ENCODE measurements at regions of chr4 and their contacts with region 1.

Region 1: GRCh38 chr4:124712372-124713184 is at the start of gene ANKRD50:
- DNase-seq: peak; percentile 89
- H3K4me3 ChIP-seq: peak within 1 kb of the TSS; percentile 78 to 98 (median 80)
- H3K27ac ChIP-seq: peak within 1 kb of the TSS; percentile 80
- H3K4me1 ChIP-seq: peaks cover 9% of the 10 kb centered on the region
- H3K27me3 ChIP-seq: no peaks in the 10 kb centered on the region
- CTCF ChIP-seq: no peak
- total RNA-seq, gene ANKRD50: 21.6 to 34.3 TPM

Region 2: GRCh38 chr4:124486426-124486825 is 226.2 kb before region 1 on chr4:
- CTCF ChIA-PET with region 1: no interaction called
- dilution Hi-C with region 1: no loop called
- in situ Hi-C with region 1: no loop called
- intact Hi-C with region 1: loop called (anchors 2 kb)
- DNase-seq: no peak
- H3K4me3 ChIP-seq: no peak overlapping the region
- H3K27ac ChIP-seq: no peak overlapping the region
- H3K4me1 ChIP-seq: no peaks in the 10 kb centered on the region
- H3K27me3 ChIP-seq: no peaks in the 10 kb centered on the region
- CTCF ChIP-seq: peak; percentile 2 to 16

Region 3: DNA sequence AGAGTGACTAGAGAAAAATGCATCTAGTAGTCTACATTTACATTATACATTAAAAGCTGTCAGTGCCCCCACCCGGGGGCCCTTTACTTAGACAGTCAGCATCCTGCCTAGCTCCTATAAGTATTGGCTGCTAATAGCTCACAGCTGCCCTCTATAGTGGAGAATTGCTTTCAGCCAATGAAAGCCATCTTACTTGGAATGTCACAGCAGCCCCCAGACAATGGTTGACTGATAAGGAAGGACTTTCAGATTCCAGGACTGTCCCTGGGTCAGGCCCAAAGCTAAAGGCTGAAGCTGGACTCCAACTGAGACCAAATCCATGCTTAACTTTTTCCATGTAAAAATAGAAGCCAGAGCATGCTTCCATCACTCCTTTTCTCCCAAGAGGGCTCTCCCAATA is 197.0 kb before region 1 on chr4:
- CTCF ChIA-PET with region 1: no interaction called
- dilution Hi-C with region 1: no loop called
- in situ Hi-C with region 1: no loop called
- intact Hi-C with region 1: no loop called
- DNase-seq: no peak
- H3K4me3 ChIP-seq: no peak overlapping the region
- H3K27ac ChIP-seq: no peak overlapping the region
- H3K4me1 ChIP-seq: no peaks in the 10 kb centered on the region
- H3K27me3 ChIP-seq: no peaks in the 10 kb centered on the region
- CTCF ChIP-seq: no peak

Region 4: GRCh38 chr4:124641715-124642381 is 70.7 kb before region 1 on chr4:
- CTCF ChIA-PET with region 1: no interaction called
- dilution Hi-C with region 1: no loop called
- in situ Hi-C with region 1: no loop called
- intact Hi-C with region 1: loop called (anchors 5 kb)
- DNase-seq: peak; percentile 89
- H3K4me3 ChIP-seq: no peak overlapping the region
- H3K27ac ChIP-seq: peak overlapping the region; percentile 40
- H3K4me1 ChIP-seq: peaks cover 33% of the 10 kb centered on the region
- H3K27me3 ChIP-seq: no peaks in the 10 kb centered on the region
- CTCF ChIP-seq: no peak

Region 5: DNA sequence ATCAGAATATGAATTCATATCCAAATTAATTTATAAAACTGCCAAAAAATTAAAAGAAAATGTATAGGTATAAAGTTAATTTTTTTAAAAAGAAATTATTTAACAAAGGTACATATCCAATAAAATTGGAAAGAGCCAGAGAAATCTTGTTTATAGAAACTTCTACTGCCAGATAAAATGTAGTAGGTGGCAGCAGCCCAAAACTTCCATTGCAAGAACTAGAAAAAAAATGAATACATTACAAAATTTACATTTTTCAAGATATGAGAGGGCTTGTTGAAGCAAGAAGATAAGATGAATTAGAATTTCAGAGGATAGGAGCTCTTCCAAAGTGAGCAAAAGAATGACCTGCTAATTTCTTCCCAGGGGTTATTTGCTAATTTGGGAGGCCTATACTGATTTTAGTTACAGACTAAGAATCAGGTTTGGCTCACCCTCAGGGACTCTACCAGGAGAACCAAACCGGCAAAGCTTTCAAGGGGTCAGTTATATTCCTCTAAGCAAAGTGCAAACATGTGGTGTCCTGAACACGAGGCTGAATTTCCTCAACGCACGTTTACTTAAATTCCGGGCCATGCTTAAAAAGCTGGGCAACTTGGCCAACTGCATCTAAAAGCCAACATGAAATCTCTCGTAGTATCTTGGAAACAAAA is 17.5 kb before region 1 on chr4:
- CTCF ChIA-PET with region 1: no interaction called
- dilution Hi-C with region 1: no loop called
- in situ Hi-C with region 1: no loop called
- intact Hi-C with region 1: no loop called
- DNase-seq: no peak
- H3K4me3 ChIP-seq: no peak overlapping the region
- H3K27ac ChIP-seq: no peak overlapping the region
- H3K4me1 ChIP-seq: no peaks in the 10 kb centered on the region
- H3K27me3 ChIP-seq: no peaks in the 10 kb centered on the region
- CTCF ChIP-seq: no peak

Region 6: GRCh38 chr4:124738994-124739393 is 26.4 kb after region 1 on chr4:
- CTCF ChIA-PET with region 1: no interaction called
- dilution Hi-C with region 1: no loop called
- in situ Hi-C with region 1: no loop called
- intact Hi-C with region 1: no loop called
- DNase-seq: no peak
- H3K4me3 ChIP-seq: no peak overlapping the region
- H3K27ac ChIP-seq: no peak overlapping the region
- H3K4me1 ChIP-seq: no peaks in the 10 kb centered on the region
- H3K27me3 ChIP-seq: no peaks in the 10 kb centered on the region
- CTCF ChIP-seq: no peak

Region 7: DNA sequence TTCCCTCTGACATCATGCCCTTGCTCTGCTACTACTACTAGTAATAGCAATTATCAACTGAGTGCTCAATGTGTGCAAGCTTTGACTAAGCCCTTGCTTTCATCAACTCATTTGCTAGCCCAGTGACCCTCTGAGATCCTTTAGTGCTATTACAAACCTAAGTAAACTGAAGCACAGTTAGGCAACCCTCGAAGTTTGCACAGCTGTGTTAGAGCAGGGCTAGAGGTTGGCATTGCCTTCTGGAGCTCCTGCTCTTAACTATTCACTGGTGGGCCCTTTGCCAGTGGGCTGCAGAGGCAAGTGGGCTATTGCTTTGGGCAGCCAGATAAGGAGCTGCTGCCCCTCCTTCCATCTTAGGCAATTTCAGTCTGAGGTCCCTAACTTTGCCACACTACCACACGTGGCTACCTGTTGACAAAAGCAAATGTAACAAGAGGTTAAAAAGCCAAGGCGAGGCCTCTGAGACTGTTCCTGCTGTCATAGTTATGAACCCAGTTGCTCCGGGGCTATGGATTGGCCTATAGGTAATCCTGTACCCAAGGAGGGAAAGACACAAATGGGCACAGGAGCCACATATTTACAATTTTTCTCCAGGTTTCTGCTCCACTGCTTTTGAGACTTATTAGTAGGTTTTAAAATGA is 41.5 kb after region 1 on chr4:
- CTCF ChIA-PET with region 1: no interaction called
- dilution Hi-C with region 1: no loop called
- in situ Hi-C with region 1: no loop called
- intact Hi-C with region 1: no loop called
- DNase-seq: no peak
- H3K4me3 ChIP-seq: no peak overlapping the region
- H3K27ac ChIP-seq: no peak overlapping the region
- H3K4me1 ChIP-seq: no peaks in the 10 kb centered on the region
- H3K27me3 ChIP-seq: no peaks in the 10 kb centered on the region
- CTCF ChIP-seq: no peak

Region 8: GRCh38 chr4:125105561-125105960 is 393.0 kb after region 1 on chr4:
- CTCF ChIA-PET with region 1: no interaction called
- dilution Hi-C with region 1: no loop called
- in situ Hi-C with region 1: no loop called
- intact Hi-C with region 1: loop called (anchors 2 kb)
- DNase-seq: no peak
- H3K4me3 ChIP-seq: no peak overlapping the region
- H3K27ac ChIP-seq: no peak overlapping the region
- H3K4me1 ChIP-seq: peaks cover 5% of the 10 kb centered on the region
- H3K27me3 ChIP-seq: no peaks in the 10 kb centered on the region
- CTCF ChIP-seq: no peak

Region 9: DNA sequence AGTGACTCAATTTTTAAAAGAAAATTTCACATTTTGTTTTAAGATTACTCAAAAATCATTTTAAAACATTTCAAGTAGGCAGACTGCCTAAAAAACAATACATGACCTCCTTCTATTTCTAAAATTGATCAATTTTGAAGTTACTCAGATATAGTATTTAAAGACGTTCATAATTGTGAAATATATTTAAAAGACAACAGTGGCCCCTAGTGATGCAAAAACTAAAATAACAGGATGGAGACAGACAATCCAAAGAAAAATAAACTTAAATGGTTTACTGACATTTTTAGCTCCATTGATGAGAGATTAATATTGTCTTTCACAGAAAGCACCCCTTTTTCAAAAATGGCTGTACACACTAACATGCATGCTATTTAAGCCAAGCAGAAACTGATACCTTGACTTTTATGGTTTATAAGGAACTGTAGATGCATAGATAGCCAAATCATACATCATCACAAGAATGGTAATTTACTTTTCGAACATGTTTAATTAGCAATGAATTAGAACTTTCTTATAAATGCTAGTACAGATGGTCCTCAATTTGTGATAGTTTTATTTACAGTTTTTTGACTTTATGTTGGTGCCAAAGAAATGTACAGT is 532.4 kb after region 1 on chr4:
- CTCF ChIA-PET with region 1: no interaction called
- dilution Hi-C with region 1: no loop called
- in situ Hi-C with region 1: loop called in 1 of 2 experiments (anchors 25 kb)
- intact Hi-C with region 1: loop called (anchors 1 kb)
- DNase-seq: peak; percentile 14
- H3K4me3 ChIP-seq: no peak overlapping the region
- H3K27ac ChIP-seq: no peak overlapping the region
- H3K4me1 ChIP-seq: peaks cover 7% of the 10 kb centered on the region
- H3K27me3 ChIP-seq: no peaks in the 10 kb centered on the region
- CTCF ChIP-seq: peak; percentile 27 to 36